ENCODE measurements at regions of chr20 and their contacts with region 1.

Region 1: DNA sequence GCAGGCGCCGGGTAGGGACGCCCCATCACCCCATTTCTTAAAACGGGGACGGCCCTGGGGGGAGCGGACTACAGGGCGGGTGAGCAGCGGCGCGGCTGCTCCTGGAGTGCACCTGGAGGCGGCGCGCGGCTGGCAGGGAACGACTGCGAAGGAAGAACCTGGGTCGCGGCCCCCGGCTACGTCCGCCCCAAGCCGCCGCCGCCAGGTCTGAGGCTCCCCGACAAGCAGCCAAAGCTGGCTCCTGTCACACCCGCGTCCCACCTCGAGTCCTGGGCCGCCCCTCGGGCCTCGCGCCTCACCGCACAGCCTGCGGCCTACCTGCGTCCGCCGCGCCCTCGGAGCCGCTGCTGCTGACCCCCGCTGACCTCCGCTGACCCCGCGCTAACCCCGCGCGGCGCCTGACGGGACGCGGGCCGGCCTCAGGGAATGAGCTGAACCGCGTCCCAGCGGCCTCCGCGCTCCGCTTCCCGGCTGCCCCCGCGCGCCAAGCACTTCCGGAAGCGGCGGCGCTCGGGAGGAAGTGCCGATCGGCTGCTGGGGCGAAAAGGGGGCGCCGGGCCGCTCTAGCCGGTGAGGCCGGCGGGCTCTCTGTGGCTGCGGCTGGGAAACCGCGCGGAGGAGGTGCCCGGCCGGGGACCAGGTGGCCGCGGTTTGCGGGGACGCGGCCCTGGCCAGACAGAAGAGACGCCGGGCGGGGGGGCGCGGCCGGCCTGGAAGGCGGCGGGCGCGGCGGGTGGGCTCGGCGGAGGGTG is at the starts of genes ARFRP1 and ZGPAT:
- DNase-seq: peak; percentile 90
- H3K4me3 Mint-ChIP-seq: peak within 1 kb of the TSS; percentile 80
- H3K27ac Mint-ChIP-seq: peak within 1 kb of the TSS; percentile 86
- H3K4me1 Mint-ChIP-seq: peaks cover 46% of the 10 kb centered on the region
- H3K27me3 Mint-ChIP-seq: no peaks in the 10 kb centered on the region
- total RNA-seq, gene ARFRP1: 45.6 to 49.2 TPM
- total RNA-seq, gene ZGPAT: 15.3 to 18.0 TPM

Region 2: GRCh38 chr20:63657937-63658748 is 49.6 kb before region 1 on chr20 and contains the start of gene RTEL1:
- CTCF ChIA-PET with region 1: no interaction called
- intact Hi-C with region 1: loop called (anchors 1 kb)
- DNase-seq: peak; percentile 88
- H3K4me3 Mint-ChIP-seq: peak within 1 kb of the TSS; percentile 98
- H3K27ac Mint-ChIP-seq: peak within 1 kb of the TSS; percentile 93
- H3K4me1 Mint-ChIP-seq: peaks cover 38% of the 10 kb centered on the region
- H3K27me3 Mint-ChIP-seq: no peaks in the 10 kb centered on the region
- total RNA-seq, gene RTEL1: 33.6 to 34.8 TPM

Region 3: DNA sequence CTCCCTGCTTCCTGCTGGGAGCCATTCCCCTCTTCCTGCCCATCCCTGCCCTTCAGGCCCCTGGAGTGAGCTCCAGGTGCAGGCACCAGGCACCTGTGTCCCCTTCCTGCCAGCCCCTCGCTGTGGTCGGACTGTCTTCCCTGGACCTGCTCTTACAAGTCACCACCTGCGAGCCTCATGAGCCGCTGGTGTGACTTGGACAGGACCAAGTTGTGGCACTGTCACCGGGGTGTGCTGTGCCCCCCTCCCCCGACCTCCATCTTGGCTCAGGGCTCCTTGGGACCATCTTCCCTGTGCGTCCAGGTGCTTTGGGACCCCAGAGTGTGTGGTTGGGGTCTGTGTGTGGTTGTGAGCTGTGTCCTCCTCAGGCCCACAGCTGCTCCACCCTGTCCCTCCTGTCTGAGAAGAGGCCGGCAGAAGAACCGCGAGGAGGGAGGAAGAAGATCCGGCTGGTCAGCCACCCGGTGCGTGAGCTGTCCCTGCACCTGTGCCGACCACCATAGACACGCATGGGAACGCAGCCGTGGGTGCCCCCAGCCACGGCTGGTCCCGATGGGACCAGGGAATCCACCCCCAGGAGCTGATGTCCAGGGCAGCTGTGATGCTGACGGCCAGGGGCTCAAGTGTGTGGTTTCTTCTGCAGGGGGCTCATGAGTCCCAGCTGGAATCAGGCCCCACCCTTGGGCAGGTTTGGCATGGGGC is 16.2 kb before region 1 on chr20:
- CTCF ChIA-PET with region 1: no interaction called
- intact Hi-C with region 1: no loop called
- DNase-seq: no peak
- H3K4me3 Mint-ChIP-seq: no peak overlapping the region
- H3K27ac Mint-ChIP-seq: no peak overlapping the region
- H3K4me1 Mint-ChIP-seq: peaks cover 20% of the 10 kb centered on the region
- H3K27me3 Mint-ChIP-seq: no peaks in the 10 kb centered on the region

Region 4: DNA sequence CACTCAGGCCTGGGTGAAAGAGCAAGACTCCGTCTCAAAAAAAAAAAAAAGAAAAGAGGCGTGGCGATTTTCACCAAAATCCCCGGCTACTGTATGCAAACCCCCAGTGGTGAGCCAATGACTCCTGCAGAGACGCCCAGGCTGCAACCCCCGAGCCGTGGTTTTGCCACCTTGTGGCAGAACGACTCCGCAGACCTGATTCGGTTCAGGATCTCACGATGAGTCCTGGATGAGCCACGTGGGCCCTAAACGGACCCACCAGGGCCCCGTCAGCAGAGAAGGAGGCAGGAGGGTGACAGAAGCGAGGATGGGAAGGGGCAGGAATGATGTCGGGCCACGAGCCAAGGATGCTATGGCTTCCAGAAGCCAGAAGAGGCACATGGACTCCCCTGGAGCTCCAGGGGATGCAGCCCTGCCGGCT is 74.3 kb after region 1 on chr20:
- CTCF ChIA-PET with region 1: interaction called, 6 read pairs
- intact Hi-C with region 1: loop called (anchors 1 kb)
- DNase-seq: peak; percentile 65
- H3K4me3 Mint-ChIP-seq: no peak overlapping the region
- H3K27ac Mint-ChIP-seq: no peak overlapping the region
- H3K4me1 Mint-ChIP-seq: peaks cover 11% of the 10 kb centered on the region
- H3K27me3 Mint-ChIP-seq: no peaks in the 10 kb centered on the region

Region 5: GRCh38 chr20:63955827-63956663 is 248.3 kb after region 1 on chr20 and contains the start of gene UCKL1:
- CTCF ChIA-PET with region 1: interaction called, 3 read pairs
- intact Hi-C with region 1: loop called (anchors 1 kb)
- DNase-seq: peak; percentile 91
- H3K4me3 Mint-ChIP-seq: peak within 1 kb of the TSS; percentile 79
- H3K27ac Mint-ChIP-seq: peak within 1 kb of the TSS; percentile 85
- H3K4me1 Mint-ChIP-seq: peaks cover 39% of the 10 kb centered on the region
- H3K27me3 Mint-ChIP-seq: no peaks in the 10 kb centered on the region
- total RNA-seq, gene UCKL1: 23.3 to 23.9 TPM

Measured in activated naive CD4-positive, alpha-beta T cell treated with anti-CD3 and anti-CD28 coated beads for 36 hours (primary cell).